ENCODE measurements at regions of chr5 and their contacts with region 1.

Region 1: GRCh38 chr5:149852641-149853330 is 91.8 kb downstream of the PDE6A start:
- DNase-seq: peak; percentile 76 to 77
- ATAC-seq: peak; percentile 86 to 94
- H3K4me3 ChIP-seq: no peak overlapping the region
- H3K27ac ChIP-seq: peak overlapping the region; percentile 34 to 42; a peak in 2 of 6 replicates
- H3K4me1 ChIP-seq: peaks cover 13% of the 10 kb centered on the region
- CTCF ChIP-seq: peak; percentile 89
- EP300 ChIP-seq: no peak
- POLR2A ChIP-seq: no peak
- RAD21 ChIP-seq: peak; percentile 62 to 70

Region 2: GRCh38 chr5:149828161-149828884 is 24.5 kb before region 1 on chr5:
- CTCF ChIA-PET with region 1: interaction called, 768 read pairs
- POLR2A ChIA-PET with region 1: no interaction called
- DNase-seq: peak; percentile 91 to 96
- ATAC-seq: peak; percentile 89 to 94
- H3K4me3 ChIP-seq: no peak overlapping the region
- H3K27ac ChIP-seq: peak overlapping the region; percentile 29 to 67; a peak in 4 of 6 replicates
- H3K4me1 ChIP-seq: peaks cover 5% of the 10 kb centered on the region; the same call in 1 of the 3 replicates
- CTCF ChIP-seq: peak; percentile 97
- EP300 ChIP-seq: no peak
- POLR2A ChIP-seq: no peak
- RAD21 ChIP-seq: peak; percentile 97

Region 3: DNA sequence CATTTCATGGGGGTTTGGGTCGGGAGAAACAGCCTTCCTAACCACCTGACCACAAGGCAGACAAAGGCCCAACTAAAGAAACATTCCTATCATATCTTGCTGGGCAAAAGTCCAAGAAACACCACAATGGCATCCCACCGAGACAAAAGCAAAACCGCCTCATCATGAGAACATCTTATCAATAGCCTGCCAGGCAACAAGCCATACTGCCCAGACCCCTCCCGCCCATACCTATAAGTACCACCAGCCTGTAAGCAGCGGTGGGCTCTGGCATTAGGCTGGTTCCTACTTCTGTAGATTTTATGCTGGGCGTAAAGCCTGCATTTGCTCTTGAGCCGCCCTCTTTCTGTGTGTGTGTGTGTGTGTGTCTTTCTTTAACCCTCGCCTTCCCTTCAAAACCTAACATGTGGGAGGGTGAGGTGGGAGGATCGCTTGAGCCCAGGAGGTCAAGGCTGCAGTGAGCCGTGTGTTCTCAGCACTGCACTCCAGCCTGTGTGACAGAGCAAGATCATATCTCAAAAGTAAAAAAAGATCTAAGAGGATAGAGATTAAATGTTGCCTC is 34.9 kb after region 1 on chr5:
- CTCF ChIA-PET with region 1: interaction called, 13 read pairs
- POLR2A ChIA-PET with region 1: no interaction called
- DNase-seq: peak in 1 of 2 experiments; percentile 53
- ATAC-seq: peak; percentile 67 to 84; a peak in 4 of 6 replicates
- H3K4me3 ChIP-seq: no peak overlapping the region
- H3K27ac ChIP-seq: peak overlapping the region; percentile 59 to 82
- H3K4me1 ChIP-seq: peaks cover 18% of the 10 kb centered on the region
- CTCF ChIP-seq: no peak
- EP300 ChIP-seq: no peak
- POLR2A ChIP-seq: no peak
- RAD21 ChIP-seq: no peak

Region 4: DNA sequence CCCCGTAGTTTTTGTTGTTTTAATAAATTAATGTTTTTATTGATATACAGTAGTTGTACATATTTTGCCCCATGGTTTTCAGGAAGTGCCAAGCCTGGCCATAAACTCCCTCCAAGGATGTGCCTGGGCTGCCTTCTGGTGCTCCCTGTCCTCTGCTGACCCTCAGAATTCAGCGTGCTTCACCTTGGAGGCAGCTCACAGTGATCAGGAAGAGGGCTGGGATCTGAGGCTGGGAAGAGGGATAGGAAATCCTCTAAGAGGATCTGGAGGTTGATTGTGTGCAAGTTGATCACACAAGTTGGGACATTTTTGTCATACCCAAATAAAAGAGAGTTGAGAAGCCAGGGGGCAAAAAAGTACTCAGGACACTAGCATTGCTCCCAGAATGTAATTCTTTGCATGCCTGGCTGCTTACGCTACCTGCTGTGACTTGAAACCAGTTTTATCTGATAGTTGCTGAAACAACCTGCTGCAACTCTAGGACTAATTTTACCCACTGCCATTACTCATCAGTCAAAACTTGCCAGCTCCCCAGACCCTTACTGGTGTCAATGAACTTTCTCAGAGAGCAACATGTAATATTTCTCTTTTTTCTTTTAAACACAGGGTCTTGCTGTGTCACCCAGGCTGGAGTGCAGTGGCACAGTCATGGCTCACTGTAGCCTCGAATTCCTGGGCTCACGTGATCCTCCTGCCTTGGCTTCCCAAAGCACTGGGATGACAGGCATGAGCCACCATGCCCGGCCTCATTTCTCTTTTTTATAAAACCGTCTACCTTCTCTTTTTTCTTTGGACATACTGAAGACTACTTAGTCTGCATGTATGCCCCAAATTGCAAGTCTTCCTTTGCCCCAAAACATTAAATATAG is 62.8 kb after region 1 on chr5:
- CTCF ChIA-PET with region 1: interaction called, 13 read pairs
- POLR2A ChIA-PET with region 1: no interaction called
- DNase-seq: no peak
- ATAC-seq: no peak
- H3K4me3 ChIP-seq: no peak overlapping the region
- H3K27ac ChIP-seq: no peak overlapping the region
- H3K4me1 ChIP-seq: no peaks in the 10 kb centered on the region
- CTCF ChIP-seq: no peak
- EP300 ChIP-seq: no peak
- POLR2A ChIP-seq: no peak
- RAD21 ChIP-seq: no peak

Region 5: DNA sequence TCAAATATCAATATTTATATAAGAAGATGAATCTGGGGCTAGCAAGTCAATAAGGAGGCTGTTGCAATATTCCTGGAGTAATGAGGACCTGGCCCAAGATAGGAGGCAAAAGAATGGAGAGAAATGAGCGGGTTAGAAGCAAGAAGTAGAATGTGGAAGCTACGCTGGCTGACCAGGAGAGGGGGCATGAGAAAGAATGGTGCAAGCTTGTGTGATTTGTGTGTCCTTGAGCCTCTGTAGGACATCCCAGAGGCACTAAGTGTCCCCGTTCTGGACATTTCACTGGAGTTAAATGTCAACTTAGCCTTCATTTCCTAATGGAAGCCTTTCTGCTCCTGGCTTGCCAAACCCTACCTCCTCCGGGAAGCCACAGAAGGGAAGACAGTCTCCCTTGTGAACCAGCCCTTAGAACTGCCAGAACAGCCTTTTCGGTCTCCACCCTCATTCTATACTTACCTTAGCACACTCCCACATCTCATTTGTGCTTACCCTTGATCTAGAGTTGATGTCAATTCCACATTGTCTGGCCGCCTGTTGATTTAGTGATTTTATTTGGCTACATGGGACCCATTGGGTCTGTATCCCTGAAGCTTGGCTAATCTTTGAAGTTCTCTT is 98.5 kb after region 1 on chr5:
- CTCF ChIA-PET with region 1: interaction called, 11 read pairs
- POLR2A ChIA-PET with region 1: no interaction called
- DNase-seq: peak in 1 of 2 experiments; percentile 22
- ATAC-seq: peak in 1 of 2 experiments; percentile 75; a peak in 3 of 6 replicates
- H3K4me3 ChIP-seq: no peak overlapping the region
- H3K27ac ChIP-seq: peak overlapping the region; percentile 25 to 49; a peak in 3 of 6 replicates
- H3K4me1 ChIP-seq: no peaks in the 10 kb centered on the region; the same call in 1 of the 3 replicates
- CTCF ChIP-seq: no peak
- EP300 ChIP-seq: no peak
- POLR2A ChIP-seq: no peak
- RAD21 ChIP-seq: no peak

Measured in A549 (cell line).